HepG2 (cell line): ENCODE measurements at regions of chr6 and their contacts with region 1.

Region 1: DNA sequence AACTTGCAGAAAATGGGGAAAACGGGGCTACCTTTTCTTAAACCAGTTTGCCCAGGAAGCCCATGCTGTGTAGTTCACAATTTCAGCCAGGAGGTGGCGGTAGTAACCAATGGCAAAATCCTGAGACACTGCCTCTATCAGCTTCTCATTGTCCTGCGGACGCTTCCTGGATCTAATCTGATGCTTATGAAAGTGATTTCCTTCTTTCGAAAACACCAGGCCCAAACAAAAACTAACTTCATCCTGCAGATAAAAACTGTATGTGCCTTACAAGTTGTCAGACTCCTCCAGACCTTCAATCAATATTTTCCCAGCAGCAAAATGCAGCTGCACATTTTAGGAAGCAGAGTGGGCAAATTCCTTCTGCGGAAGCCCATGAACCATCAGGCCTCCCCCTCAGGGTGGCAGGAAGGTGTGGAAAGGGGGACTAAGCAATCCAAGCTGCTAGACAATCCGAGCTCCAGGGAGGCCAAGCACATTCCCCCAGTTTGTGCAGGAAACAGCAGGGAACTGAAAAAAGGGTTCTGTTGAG is 88.5 kb downstream of the LY86 start:
- DNase-seq: peak; percentile 67
- ATAC-seq: peak; percentile 69
- H3K4me3 ChIP-seq: no peak overlapping the region
- H3K27ac ChIP-seq: no peak overlapping the region
- H3K4me1 ChIP-seq: peaks cover 21% of the 10 kb centered on the region
- H3K27me3 ChIP-seq: peaks cover 0 to 10% of the 10 kb centered on the region in 2 experiments; a peak in 2 of 5 replicates
- CTCF ChIP-seq: peak; percentile 90
- EP300 ChIP-seq: no peak
- POLR2A ChIP-seq: no peak
- RAD21 ChIP-seq: peak; percentile 82

Region 2: DNA sequence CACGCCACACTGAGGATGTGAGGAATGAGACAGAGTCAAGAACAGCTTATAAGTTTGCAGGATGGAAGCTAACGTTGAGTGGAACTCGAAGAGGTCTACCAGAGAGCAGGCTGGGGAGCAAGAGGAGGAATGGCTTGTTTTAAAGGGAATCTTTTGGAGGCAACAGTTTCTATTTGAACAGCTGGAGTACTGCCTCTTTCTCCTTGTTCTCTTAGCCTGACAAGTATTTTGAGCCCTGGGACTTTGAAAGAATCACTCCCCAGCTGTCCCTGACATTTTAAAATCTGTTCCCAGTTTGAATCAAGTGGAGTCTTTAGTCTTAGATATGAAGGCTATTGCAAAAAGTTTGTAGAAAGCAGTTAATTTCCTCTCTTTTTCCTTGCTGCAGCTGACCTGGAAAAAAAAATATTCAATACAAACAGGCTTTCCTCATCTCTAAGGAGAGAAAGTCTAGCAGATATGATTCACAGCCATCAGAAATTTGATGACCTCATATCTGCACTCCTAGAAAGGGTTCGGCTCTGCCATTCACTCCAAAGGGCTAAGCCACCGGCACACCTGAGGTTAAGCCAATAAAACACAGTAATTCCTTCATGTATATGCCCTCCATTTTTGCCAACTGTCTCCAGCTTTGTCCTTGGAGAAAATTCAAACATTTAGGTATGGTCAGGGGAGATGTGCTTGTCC is 107.4 kb before region 1 on chr6:
- CTCF ChIA-PET with region 1: no interaction called
- POLR2A ChIA-PET with region 1: no interaction called
- in situ Hi-C with region 1: no loop called
- intact Hi-C with region 1: no loop called
- DNase-seq: no peak
- ATAC-seq: no peak
- H3K4me3 ChIP-seq: no peak overlapping the region
- H3K27ac ChIP-seq: no peak overlapping the region
- H3K4me1 ChIP-seq: no peaks in the 10 kb centered on the region
- H3K27me3 ChIP-seq: peaks cover 0 to 13% of the 10 kb centered on the region in 2 experiments; a peak in 2 of 5 replicates
- CTCF ChIP-seq: no peak
- EP300 ChIP-seq: no peak
- POLR2A ChIP-seq: no peak
- RAD21 ChIP-seq: no peak

Region 3: DNA sequence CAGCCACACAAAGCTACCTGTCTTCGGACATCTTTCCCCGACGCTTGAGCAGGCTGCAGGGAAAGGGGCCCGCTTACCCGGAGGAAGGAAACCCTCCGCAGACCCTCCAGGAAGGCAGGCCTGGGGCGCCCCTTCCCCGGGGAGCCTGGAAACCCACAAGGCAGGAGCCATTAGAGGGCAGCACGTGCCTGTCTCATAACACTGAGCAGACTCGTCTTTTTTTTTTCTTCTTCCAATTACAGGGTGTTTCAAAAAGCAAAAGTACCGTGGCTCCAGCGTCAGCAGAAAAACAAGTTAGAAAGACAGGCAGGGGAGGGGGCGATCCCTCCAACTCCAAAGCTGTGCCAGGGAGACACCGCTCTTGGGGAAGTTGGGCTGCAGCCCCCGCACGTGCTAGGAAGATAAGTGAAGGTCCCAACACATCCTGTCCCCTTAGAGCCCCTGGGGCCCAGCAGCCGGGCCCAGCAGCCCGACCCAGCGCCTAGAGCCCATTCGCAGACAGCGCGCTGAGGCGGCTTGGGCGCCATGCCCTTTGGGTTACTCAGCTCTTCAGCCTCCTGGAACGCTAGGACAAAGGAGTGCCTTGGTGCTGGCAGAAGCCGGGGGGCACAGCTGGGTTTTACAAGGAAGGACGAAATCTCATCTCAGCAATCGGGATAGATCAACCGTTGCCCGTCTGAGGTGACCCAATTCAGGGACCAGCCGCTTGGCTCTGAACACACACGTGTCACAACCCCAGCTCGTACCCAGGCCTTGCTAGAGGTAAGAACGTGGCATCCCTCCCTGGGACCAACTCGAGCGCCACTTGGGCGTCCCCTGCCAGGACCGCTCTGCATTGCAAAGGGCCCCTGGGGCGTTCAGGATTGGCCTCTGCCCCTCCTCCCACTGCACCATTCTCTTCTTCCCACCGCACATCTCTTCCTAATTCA is 47.8 kb after region 1 on chr6:
- CTCF ChIA-PET with region 1: no interaction called
- POLR2A ChIA-PET with region 1: no interaction called
- in situ Hi-C with region 1: no loop called
- intact Hi-C with region 1: loop called (anchors 2 kb)
- DNase-seq: peak; percentile 51
- ATAC-seq: peak; percentile 90
- H3K4me3 ChIP-seq: peak overlapping the region; percentile 26 to 75 (median 31)
- H3K27ac ChIP-seq: no peak overlapping the region
- H3K4me1 ChIP-seq: peaks cover 31% of the 10 kb centered on the region
- H3K27me3 ChIP-seq: peaks cover 0 to 4% of the 10 kb centered on the region in 2 experiments; a peak in 2 of 5 replicates
- CTCF ChIP-seq: peak; percentile 90
- EP300 ChIP-seq: no peak
- POLR2A ChIP-seq: no peak
- RAD21 ChIP-seq: peak; percentile 74

Region 4: GRCh38 chr6:7166410-7167305 is 489.7 kb after region 1 on chr6:
- CTCF ChIA-PET with region 1: no interaction called
- POLR2A ChIA-PET with region 1: no interaction called
- in situ Hi-C with region 1: no loop called
- intact Hi-C with region 1: no loop called
- DNase-seq: no peak
- ATAC-seq: peak; percentile 8; the same call in 2 of the 3 replicates
- H3K4me3 ChIP-seq: 0 out of 6 replicates have a peak overlapping the region, but pooled peaks of 1 of the 3 experiments have one; percentile 6
- H3K27ac ChIP-seq: peak overlapping the region; percentile 88
- H3K4me1 ChIP-seq: peaks cover 100% of the 10 kb centered on the region
- H3K27me3 ChIP-seq: no peaks in the 10 kb centered on the region
- CTCF ChIP-seq: no peak
- EP300 ChIP-seq: peak in 1 of 2 experiments; percentile 51; a peak in 1 of 4 replicates
- POLR2A ChIP-seq: no peak
- RAD21 ChIP-seq: no peak